ENCODE measurements at regions of chr6 and their contacts with region 1.

Region 1: DNA sequence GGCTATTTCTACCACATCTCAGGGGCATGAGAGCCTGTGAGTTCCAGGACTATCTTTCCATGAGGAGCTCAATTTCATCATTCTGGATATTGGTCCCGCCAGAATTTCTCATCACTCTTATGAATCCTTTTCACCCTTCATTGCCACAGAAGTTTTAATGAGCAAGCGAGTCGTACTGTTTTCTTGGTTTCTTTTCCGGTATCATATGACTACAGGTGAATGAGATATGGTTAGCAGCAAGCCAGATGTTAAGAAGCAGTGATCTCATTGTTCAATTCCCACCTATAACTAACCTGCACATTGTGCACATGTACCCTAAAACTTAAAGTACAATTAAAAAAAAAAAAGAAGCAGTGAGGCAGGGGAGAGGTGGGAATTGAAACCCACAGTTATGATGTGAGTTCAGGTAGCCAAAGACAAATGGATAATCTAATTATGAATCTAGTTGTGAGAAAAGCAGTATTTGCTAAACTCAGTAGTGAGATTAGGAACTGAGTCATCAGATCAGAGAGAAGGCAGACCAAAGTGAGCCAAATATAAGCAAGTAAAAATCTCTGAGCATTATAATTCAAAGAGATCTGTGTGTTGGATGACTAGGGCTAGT is 78.0 kb upstream of the ELOVL5 start:
- DNase-seq: no peak
- H3K4me3 ChIP-seq: no peak overlapping the region
- H3K27ac ChIP-seq: no peak overlapping the region
- H3K4me1 ChIP-seq: no peaks in the 10 kb centered on the region
- H3K27me3 ChIP-seq: no peaks in the 10 kb centered on the region
- CTCF ChIP-seq: no peak
- POLR2A ChIP-seq: no peak

Region 2: GRCh38 chr6:53437557-53438202 is 10.9 kb after region 1 on chr6:
- intact Hi-C with region 1: loop called (anchors 2 kb)
- DNase-seq: no peak
- H3K4me3 ChIP-seq: no peak overlapping the region
- H3K27ac ChIP-seq: no peak overlapping the region
- H3K4me1 ChIP-seq: peaks cover 0 to 14% of the 10 kb centered on the region in 2 donors
- H3K27me3 ChIP-seq: no peaks in the 10 kb centered on the region
- CTCF ChIP-seq: peak in 2 of 3 donors; percentile 39 to 46
- POLR2A ChIP-seq: no peak

Region 3: DNA sequence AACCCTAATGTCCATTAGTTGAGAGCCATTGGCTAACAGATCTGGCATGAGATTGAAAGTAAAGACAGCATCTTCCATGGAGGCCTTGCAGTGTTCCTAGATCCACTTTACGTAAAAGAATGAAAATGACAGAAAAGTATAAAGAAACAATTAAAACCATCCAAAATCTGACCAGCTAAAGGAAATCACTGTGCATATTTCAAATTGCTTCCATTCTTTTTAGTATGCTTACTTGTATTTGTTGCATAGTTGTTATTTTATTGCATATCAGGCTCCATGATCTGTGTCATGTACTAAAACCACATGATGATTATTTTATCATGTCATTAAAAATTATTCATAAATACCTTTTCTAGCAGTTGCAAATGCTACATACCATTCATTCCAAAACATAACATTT is 50.2 kb after region 1 on chr6:
- intact Hi-C with region 1: no loop called
- DNase-seq: no peak
- H3K4me3 ChIP-seq: no peak overlapping the region
- H3K27ac ChIP-seq: no peak overlapping the region
- H3K4me1 ChIP-seq: no peaks in the 10 kb centered on the region
- H3K27me3 ChIP-seq: no peaks in the 10 kb centered on the region
- CTCF ChIP-seq: no peak
- POLR2A ChIP-seq: no peak

Measured in breast epithelium (tissue), 4 donors.